CD8-positive, alpha-beta T cell (primary cell): ENCODE measurements at regions of chr5 and their contacts with region 1.

Region 1: DNA sequence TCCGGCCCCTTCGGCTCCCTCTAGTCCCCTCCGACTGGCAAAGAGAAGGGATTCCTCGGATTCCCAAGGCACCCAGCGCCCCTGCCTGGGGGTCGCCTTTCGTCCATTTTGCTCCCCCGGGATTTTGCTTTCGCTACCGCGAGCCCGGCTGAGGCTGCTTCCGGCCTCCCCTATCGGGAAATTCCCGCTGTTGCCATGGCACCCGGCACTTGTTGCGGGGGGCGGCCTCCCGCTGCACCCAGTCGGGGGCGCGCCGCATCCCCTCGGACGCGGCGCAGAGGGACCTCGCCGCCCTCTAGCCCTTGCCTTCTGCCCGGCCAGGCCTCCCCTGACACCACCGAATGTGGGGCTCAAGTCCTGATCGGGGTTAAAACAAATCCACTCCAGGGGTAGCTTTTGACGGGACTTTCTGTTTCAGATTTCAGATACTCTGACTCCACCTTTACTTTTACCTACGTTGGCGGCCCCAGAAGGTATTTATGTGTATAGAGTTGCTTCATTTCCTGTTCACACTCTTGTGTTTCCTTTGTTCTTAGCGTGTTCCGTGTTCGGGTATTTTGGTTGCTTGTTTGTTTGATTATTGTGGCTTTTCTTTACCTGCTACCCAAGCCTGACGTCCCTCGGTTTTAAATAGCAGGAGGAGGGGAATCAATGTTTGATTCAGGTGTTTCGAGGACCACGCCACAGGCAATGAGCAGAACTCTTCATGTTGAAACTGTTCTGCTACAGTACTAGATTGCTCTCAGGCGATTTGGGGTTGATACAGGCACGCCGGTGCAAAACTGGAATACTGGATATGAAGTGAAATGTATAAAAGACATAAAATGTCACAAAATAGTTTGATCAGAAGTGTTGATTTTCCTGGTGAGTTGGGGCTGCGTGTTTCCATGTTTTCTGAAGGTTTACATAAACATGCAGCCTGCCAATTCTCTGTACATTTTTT is 1.5 kb downstream of the PARP8 start:
- DNase-seq: peak; percentile 74 to 94 (median 89)
- ATAC-seq: peak; percentile 64
- H3K4me3 ChIP-seq: peak overlapping the region; percentile 61 to 92
- H3K4me3 Mint-ChIP-seq: peak overlapping the region; percentile 90
- H3K27ac ChIP-seq: peak overlapping the region; percentile 95 to 98
- H3K27ac Mint-ChIP-seq: peak overlapping the region; percentile 98
- H3K4me1 ChIP-seq: peaks cover 52% of the 10 kb centered on the region
- H3K4me1 Mint-ChIP-seq: peaks cover 63% of the 10 kb centered on the region
- H3K27me3 ChIP-seq: no peaks in the 10 kb centered on the region
- H3K27me3 Mint-ChIP-seq: no peaks in the 10 kb centered on the region
- CTCF ChIP-seq: no peak

Region 2: DNA sequence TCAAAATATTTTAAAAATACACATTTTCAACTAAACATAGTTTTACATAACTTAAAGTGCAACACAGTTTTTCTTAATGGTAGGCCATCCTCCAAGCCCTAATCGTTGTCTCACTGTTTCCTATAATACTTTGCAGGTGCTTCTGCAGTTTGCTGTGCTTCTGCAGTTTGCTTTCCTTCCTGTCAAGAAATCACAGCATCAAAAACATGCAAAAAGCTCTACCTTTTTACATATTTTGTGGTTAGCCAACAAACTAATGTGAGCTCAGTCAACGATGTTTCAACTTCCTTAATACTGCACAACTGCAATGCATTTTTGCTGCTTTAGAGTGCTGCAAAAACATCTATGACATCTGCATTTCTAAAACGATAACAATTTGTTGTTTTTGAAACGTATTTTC is 252.0 kb before region 1 on chr5:
- CTCF ChIA-PET with region 1: no interaction called
- POLR2A ChIA-PET with region 1: no interaction called
- intact Hi-C with region 1: loop called in 1 of 2 experiments (anchors 5 kb)
- DNase-seq: peak in 4 of 9 experiments; percentile 13 to 77 (median 40)
- ATAC-seq: peak; percentile 86
- H3K4me3 ChIP-seq: no peak overlapping the region
- H3K4me3 Mint-ChIP-seq: no peak overlapping the region
- H3K27ac ChIP-seq: peak overlapping the region; percentile 48 to 50
- H3K27ac Mint-ChIP-seq: peak overlapping the region; percentile 92
- H3K4me1 ChIP-seq: peaks cover 50% of the 10 kb centered on the region
- H3K4me1 Mint-ChIP-seq: peaks cover 83% of the 10 kb centered on the region
- H3K27me3 ChIP-seq: no peaks in the 10 kb centered on the region
- H3K27me3 Mint-ChIP-seq: no peaks in the 10 kb centered on the region
- CTCF ChIP-seq: no peak

Region 3: DNA sequence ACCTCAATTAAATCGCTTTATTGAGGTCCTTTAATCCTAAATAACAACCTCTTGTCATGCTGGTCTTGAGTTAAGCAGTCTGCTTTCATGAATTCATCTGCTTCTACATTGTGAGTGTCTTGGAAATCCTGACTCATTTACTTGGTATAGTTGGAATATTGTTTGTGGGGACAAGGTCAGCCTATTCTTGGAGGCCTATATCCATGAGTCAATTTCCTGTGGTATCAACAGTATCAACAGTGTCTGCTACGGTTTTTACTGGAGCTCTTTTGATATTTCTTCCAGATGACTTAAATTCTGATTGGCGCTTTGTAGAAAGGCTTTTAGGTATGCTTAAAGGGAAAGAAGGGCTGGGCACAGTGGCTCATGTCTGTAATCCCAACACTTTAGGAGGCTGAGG is 72.7 kb before region 1 on chr5:
- CTCF ChIA-PET with region 1: no interaction called
- POLR2A ChIA-PET with region 1: interaction called, 3 read pairs
- intact Hi-C with region 1: loop called (anchors 1 to 2 kb)
- DNase-seq: no peak
- ATAC-seq: no peak
- H3K4me3 ChIP-seq: no peak overlapping the region
- H3K4me3 Mint-ChIP-seq: no peak overlapping the region
- H3K27ac ChIP-seq: no peak overlapping the region
- H3K27ac Mint-ChIP-seq: peak overlapping the region; percentile 12
- H3K4me1 ChIP-seq: peaks cover 38% of the 10 kb centered on the region
- H3K4me1 Mint-ChIP-seq: peaks cover 48% of the 10 kb centered on the region
- H3K27me3 ChIP-seq: no peaks in the 10 kb centered on the region
- H3K27me3 Mint-ChIP-seq: no peaks in the 10 kb centered on the region
- CTCF ChIP-seq: no peak

Region 4: DNA sequence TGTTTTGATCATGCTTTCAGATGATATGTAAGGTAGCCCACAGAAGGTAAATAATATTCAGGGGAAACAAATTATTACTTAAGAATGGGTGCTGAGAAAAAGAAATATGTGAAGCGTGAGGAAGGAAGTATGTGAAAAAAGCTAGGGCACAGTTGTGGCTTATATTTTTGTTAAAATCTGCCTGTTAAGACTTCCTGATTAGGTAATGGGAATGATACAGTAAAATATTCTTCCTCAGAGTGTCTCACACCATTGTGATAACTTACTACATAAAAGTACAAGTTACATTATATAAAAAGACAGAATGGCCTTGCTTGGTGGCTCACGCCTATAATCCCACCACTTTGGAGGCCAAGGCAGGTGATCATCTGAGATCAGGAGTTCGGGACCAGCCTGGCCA is 20.2 kb before region 1 on chr5:
- CTCF ChIA-PET with region 1: no interaction called
- POLR2A ChIA-PET with region 1: interaction called, 4 read pairs
- intact Hi-C with region 1: loop called in 1 of 2 experiments (anchors 2 kb)
- DNase-seq: no peak
- ATAC-seq: no peak
- H3K4me3 ChIP-seq: no peak overlapping the region
- H3K4me3 Mint-ChIP-seq: no peak overlapping the region
- H3K27ac ChIP-seq: no peak overlapping the region
- H3K27ac Mint-ChIP-seq: peak overlapping the region; percentile 5
- H3K4me1 ChIP-seq: peaks cover 12% of the 10 kb centered on the region
- H3K4me1 Mint-ChIP-seq: peaks cover 28% of the 10 kb centered on the region
- H3K27me3 ChIP-seq: no peaks in the 10 kb centered on the region
- H3K27me3 Mint-ChIP-seq: no peaks in the 10 kb centered on the region
- CTCF ChIP-seq: no peak

Region 5: GRCh38 chr5:50702615-50703366 is 34.9 kb after region 1 on chr5:
- CTCF ChIA-PET with region 1: no interaction called
- POLR2A ChIA-PET with region 1: interaction called, 11 read pairs
- intact Hi-C with region 1: loop called in 1 of 2 experiments (anchors 2 kb)
- DNase-seq: peak in 1 of 9 experiments; percentile 42
- ATAC-seq: peak; percentile 62
- H3K4me3 ChIP-seq: no peak overlapping the region
- H3K4me3 Mint-ChIP-seq: peak overlapping the region; percentile 59
- H3K27ac ChIP-seq: peak overlapping the region in 1 of 2 experiments; percentile 51
- H3K27ac Mint-ChIP-seq: peak overlapping the region; percentile 95
- H3K4me1 ChIP-seq: peaks cover 55% of the 10 kb centered on the region
- H3K4me1 Mint-ChIP-seq: peaks cover 82% of the 10 kb centered on the region
- H3K27me3 ChIP-seq: no peaks in the 10 kb centered on the region
- H3K27me3 Mint-ChIP-seq: no peaks in the 10 kb centered on the region
- CTCF ChIP-seq: no peak

Region 6: DNA sequence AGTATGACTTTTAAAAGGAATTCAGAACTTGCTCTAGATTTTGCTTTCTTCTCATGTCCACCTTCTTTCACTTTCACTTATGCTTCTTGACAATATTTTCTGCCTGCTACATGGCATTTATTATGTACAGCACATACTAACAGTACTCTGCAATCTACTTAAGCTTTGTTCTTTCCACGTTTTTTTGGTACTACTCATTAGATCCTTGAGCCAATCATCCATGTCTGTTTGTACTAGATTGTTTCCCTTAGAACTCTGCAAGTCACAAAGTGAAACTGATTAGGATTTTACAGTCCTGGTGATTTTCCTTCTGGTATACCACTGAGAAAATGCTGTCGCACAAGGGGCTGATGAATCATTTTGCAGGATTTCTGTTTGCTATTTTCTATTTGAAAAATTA is 76.9 kb after region 1 on chr5:
- CTCF ChIA-PET with region 1: no interaction called
- POLR2A ChIA-PET with region 1: interaction called, 7 read pairs
- intact Hi-C with region 1: loop called in 1 of 2 experiments (anchors 2 kb)
- DNase-seq: peak in 2 of 9 experiments; percentile 36 to 61
- ATAC-seq: peak; percentile 65
- H3K4me3 ChIP-seq: peak overlapping the region; percentile 31 to 44
- H3K4me3 Mint-ChIP-seq: peak overlapping the region; percentile 81
- H3K27ac ChIP-seq: peak overlapping the region; percentile 17 to 71
- H3K27ac Mint-ChIP-seq: peak overlapping the region; percentile 91
- H3K4me1 ChIP-seq: peaks cover 61% of the 10 kb centered on the region
- H3K4me1 Mint-ChIP-seq: peaks cover 76% of the 10 kb centered on the region
- H3K27me3 ChIP-seq: no peaks in the 10 kb centered on the region
- H3K27me3 Mint-ChIP-seq: no peaks in the 10 kb centered on the region
- CTCF ChIP-seq: no peak